IMR-90 (cell line): ENCODE measurements at regions of chr7 and their contacts with region 1.

Region 1: DNA sequence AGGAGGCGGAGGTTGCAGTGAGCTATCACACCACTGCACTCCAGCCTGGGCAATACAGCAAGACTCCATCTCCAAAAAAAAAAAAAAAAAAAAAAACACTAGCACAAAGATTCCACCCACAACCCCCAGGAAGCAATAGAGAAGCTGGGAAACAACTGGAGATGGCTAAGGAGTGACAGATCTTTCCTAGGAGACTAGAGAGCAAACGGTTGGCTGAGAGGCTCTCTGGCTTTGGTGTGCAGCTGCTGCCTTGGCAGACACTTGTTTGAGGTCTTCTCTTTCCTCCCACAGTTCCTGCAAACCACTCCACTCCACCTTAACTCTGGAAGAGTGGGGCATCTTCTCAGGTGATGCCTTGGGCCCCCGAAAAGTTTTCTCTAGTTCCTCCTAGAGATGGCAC is 78.5 kb upstream of the LANCL2 start:
- DNase-seq: no peak
- ATAC-seq: no peak
- H3K4me3 ChIP-seq: no peak overlapping the region
- H3K27ac ChIP-seq: no peak overlapping the region
- H3K4me1 ChIP-seq: no peaks in the 10 kb centered on the region
- H3K27me3 ChIP-seq: peaks cover 35% of the 10 kb centered on the region
- CTCF ChIP-seq: no peak
- POLR2A ChIP-seq: no peak
- RAD21 ChIP-seq: no peak

Region 2: DNA sequence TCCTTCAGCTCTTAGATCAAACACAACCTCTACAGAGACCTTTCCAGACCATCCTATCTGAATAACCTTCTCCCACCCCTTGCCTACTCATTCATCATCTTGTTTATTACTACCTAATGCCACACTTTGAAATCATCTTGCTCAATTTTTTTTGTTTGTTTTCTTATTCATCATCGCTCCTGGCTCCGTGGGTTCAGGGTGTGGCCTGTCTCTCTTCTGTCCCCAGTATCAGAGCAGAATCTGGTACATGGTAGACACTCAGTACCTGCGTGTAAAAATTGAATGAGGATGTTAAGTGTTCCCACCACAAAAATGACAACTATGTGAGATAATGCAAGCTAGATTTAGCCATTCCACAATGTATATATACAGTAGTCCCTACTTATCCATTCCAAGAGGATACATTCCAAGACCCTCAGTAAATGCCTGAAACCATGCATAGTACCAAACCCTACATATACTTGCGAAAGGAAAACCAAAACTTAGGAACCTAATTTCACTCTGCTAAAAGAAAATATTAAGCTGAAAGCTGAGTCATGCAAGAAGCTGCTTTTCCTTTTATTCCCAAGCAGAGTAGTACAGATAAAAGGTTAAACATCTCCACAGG is 455.5 kb before region 1 on chr7:
- CTCF ChIA-PET with region 1: interaction called, 10 read pairs
- POLR2A ChIA-PET with region 1: no interaction called
- dilution Hi-C with region 1: no loop called
- in situ Hi-C with region 1: no loop called
- intact Hi-C with region 1: no loop called
- DNase-seq: peak; percentile 54
- ATAC-seq: peak; percentile 79
- H3K4me3 ChIP-seq: no peak overlapping the region
- H3K27ac ChIP-seq: no peak overlapping the region
- H3K4me1 ChIP-seq: peaks cover 5% of the 10 kb centered on the region
- H3K27me3 ChIP-seq: no peaks in the 10 kb centered on the region
- CTCF ChIP-seq: no peak
- POLR2A ChIP-seq: no peak
- RAD21 ChIP-seq: no peak

Region 3: GRCh38 chr7:55438757-55439525 is 152.3 kb after region 1 on chr7:
- CTCF ChIA-PET with region 1: no interaction called
- POLR2A ChIA-PET with region 1: no interaction called
- dilution Hi-C with region 1: no loop called
- in situ Hi-C with region 1: no loop called
- intact Hi-C with region 1: no loop called
- DNase-seq: peak; percentile 37
- ATAC-seq: no peak
- H3K4me3 ChIP-seq: no peak overlapping the region
- H3K27ac ChIP-seq: no peak overlapping the region
- H3K4me1 ChIP-seq: peaks cover 11% of the 10 kb centered on the region
- H3K27me3 ChIP-seq: no peaks in the 10 kb centered on the region
- CTCF ChIP-seq: no peak
- POLR2A ChIP-seq: no peak
- RAD21 ChIP-seq: no peak